Activated CD4-positive, alpha-beta T cell treated with anti-CD3 and anti-CD28 coated beads for 36 hours (primary cell): ENCODE measurements at regions of chr9 and their contacts with region 1.

Region 1: GRCh38 chr9:113523421-113524236 is 60.1 kb downstream of the RGS3 start:
- DNase-seq: peak; percentile 78
- ATAC-seq: peak; percentile 70
- H3K4me3 Mint-ChIP-seq: peak overlapping the region; percentile 40
- H3K27ac Mint-ChIP-seq: peak overlapping the region; percentile 55
- H3K4me1 Mint-ChIP-seq: peaks cover 61% of the 10 kb centered on the region
- H3K27me3 Mint-ChIP-seq: no peaks in the 10 kb centered on the region

Region 2: GRCh38 chr9:113446323-113446740 is 77.3 kb before region 1 on chr9:
- CTCF ChIA-PET with region 1: no interaction called
- POLR2A ChIA-PET with region 1: no interaction called
- intact Hi-C with region 1: loop called (anchors 2 to 5 kb)
- DNase-seq: peak; percentile 28
- ATAC-seq: peak; percentile 47
- H3K4me3 Mint-ChIP-seq: no peak overlapping the region
- H3K27ac Mint-ChIP-seq: no peak overlapping the region
- H3K4me1 Mint-ChIP-seq: peaks cover 3% of the 10 kb centered on the region
- H3K27me3 Mint-ChIP-seq: no peaks in the 10 kb centered on the region

Region 3: GRCh38 chr9:113468716-113469448 is 54.7 kb before region 1 on chr9:
- CTCF ChIA-PET with region 1: no interaction called
- POLR2A ChIA-PET with region 1: no interaction called
- intact Hi-C with region 1: no loop called
- DNase-seq: no peak
- ATAC-seq: no peak
- H3K4me3 Mint-ChIP-seq: no peak overlapping the region
- H3K27ac Mint-ChIP-seq: no peak overlapping the region
- H3K4me1 Mint-ChIP-seq: no peaks in the 10 kb centered on the region
- H3K27me3 Mint-ChIP-seq: no peaks in the 10 kb centered on the region

Region 4: DNA sequence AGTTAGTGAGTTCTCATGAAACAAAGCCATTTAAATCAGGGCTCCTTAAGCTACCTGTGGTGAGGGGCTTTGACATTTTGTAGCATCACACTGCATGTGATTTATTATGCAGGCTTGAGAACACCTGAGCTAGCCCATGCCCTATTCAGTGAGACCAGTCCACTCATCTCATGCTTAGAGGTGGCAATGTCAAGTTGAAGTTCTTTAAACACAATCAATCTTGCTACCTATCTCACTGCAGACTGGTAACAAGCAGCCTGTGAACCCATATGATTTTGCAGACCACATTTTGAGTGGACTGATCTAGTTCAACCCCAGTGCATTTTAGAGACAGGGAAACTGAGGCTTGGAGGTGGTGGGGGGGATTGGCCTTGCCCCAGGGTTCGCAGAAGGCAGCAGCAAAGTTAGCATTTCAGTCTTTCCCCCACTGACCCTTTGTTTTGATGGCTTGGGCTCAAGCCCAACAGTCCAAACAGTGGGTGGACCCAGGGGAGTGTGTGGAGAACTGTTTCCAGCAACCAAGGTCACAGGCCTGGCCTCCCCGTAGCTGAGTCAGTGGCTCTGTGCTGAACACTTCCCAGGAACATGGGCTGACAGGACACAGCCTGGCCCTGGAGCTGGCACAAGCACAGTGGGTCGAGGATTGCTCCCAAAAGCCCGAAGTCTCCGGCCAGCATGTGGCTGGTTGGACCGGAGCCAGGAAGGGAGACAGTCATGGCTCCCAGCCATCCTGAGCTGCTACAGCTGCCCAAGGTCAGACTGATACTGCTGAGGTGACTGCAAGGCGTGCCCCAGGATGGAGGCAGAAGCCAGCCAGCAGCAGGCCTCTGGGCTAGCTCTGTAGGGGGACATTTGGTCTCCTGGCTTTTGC is 35.2 kb after region 1 on chr9:
- CTCF ChIA-PET with region 1: interaction called, 3 read pairs
- POLR2A ChIA-PET with region 1: no interaction called
- intact Hi-C with region 1: loop called (anchors 2 to 5 kb)
- DNase-seq: no peak
- ATAC-seq: no peak
- H3K4me3 Mint-ChIP-seq: no peak overlapping the region
- H3K27ac Mint-ChIP-seq: no peak overlapping the region
- H3K4me1 Mint-ChIP-seq: peaks cover 34% of the 10 kb centered on the region
- H3K27me3 Mint-ChIP-seq: no peaks in the 10 kb centered on the region